ENCODE measurements at regions of chr5 and their contacts with region 1.

Region 1: DNA sequence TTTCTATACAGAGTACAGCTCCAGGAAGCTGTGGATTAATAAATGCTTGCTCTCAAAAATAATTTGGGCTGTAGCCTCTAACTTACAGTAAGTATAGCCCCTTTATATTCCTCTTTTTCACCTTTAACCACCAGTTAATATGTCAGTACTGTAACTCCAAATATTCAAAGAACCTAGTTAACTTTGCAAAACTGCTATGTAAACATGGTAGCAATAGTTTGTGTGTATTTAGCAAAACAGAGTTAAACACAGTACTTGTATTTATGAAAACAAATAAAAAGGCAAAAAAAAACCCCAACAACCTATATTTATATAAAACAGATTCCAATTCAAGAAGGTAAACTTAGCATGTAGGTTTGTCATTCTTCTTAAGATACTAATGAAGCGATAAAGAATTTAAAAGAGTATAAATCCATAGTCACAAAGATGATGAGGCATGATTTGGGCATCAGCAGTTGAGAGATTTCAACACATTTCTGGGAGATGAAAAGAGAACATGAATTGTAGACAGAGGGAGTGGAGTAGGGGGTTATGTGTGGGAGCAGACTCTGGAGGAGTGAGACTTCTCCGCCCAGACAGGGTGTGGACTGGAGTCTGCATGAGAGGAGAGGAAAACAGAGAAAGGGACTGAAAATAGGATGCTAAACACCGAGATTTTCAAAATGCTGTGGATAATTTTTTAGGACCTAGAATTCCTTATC is 47.0 kb upstream of the F2RL1 start:
- DNase-seq: no peak
- H3K4me3 ChIP-seq: no peak overlapping the region
- H3K27ac ChIP-seq: no peak overlapping the region
- H3K4me1 ChIP-seq: 0 out of 2 replicates have a peak, but pooled peaks cover 6% of the 10 kb centered on the region
- H3K27me3 ChIP-seq: no peaks in the 10 kb centered on the region
- CTCF ChIP-seq: no peak

Region 2: GRCh38 chr5:76337953-76338451 is 433.9 kb before region 1 on chr5:
- CTCF ChIA-PET with region 1: interaction called, 3 read pairs
- POLR2A ChIA-PET with region 1: no interaction called
- intact Hi-C with region 1: loop called (anchors 10 kb)
- DNase-seq: peak; percentile 72 to 76
- H3K4me3 ChIP-seq: no peak overlapping the region
- H3K27ac ChIP-seq: no peak overlapping the region
- H3K4me1 ChIP-seq: 0 out of 2 replicates have a peak, but pooled peaks cover 4% of the 10 kb centered on the region
- H3K27me3 ChIP-seq: no peaks in the 10 kb centered on the region
- CTCF ChIP-seq: peak; percentile 78

Region 3: GRCh38 chr5:76601470-76601869 is 170.4 kb before region 1 on chr5:
- CTCF ChIA-PET with region 1: interaction called, 19 read pairs
- POLR2A ChIA-PET with region 1: no interaction called
- intact Hi-C with region 1: loop called (anchors 1 kb)
- DNase-seq: peak in 1 of 2 experiments; percentile 23
- H3K4me3 ChIP-seq: no peak overlapping the region
- H3K27ac ChIP-seq: no peak overlapping the region
- H3K4me1 ChIP-seq: peaks cover 7% of the 10 kb centered on the region
- H3K27me3 ChIP-seq: no peaks in the 10 kb centered on the region
- CTCF ChIP-seq: peak; percentile 85

Region 4: GRCh38 chr5:76689321-76690036 is 82.4 kb before region 1 on chr5:
- CTCF ChIA-PET with region 1: no interaction called
- POLR2A ChIA-PET with region 1: no interaction called
- intact Hi-C with region 1: no loop called
- DNase-seq: peak in 1 of 2 experiments; percentile 89
- H3K4me3 ChIP-seq: no peak overlapping the region
- H3K27ac ChIP-seq: peak overlapping the region; percentile 25; the same call in 1 of the 2 replicates
- H3K4me1 ChIP-seq: peaks cover 33% of the 10 kb centered on the region
- H3K27me3 ChIP-seq: no peaks in the 10 kb centered on the region
- CTCF ChIP-seq: no peak

Region 5: GRCh38 chr5:76715736-76716455 is 56.0 kb before region 1 on chr5 and contains the start of gene F2R:
- CTCF ChIA-PET with region 1: no interaction called
- POLR2A ChIA-PET with region 1: no interaction called
- intact Hi-C with region 1: loop called (anchors 1 kb)
- DNase-seq: peak in 1 of 2 experiments; percentile 30
- H3K4me3 ChIP-seq: peak within 1 kb of the TSS; percentile 87
- H3K27ac ChIP-seq: no peak within 1 kb of the TSS
- H3K4me1 ChIP-seq: no peaks in the 10 kb centered on the region; the same call in 1 of the 2 replicates
- H3K27me3 ChIP-seq: no peaks in the 10 kb centered on the region
- CTCF ChIP-seq: peak; percentile 59; the same call in 1 of the 2 replicates
- total RNA-seq, gene F2R: 3.6 and 3.9 TPM in 2 replicates

Region 6: GRCh38 chr5:76782444-76782843 is 10.6 kb after region 1 on chr5:
- CTCF ChIA-PET with region 1: no interaction called
- POLR2A ChIA-PET with region 1: no interaction called
- intact Hi-C with region 1: no loop called
- DNase-seq: no peak
- H3K4me3 ChIP-seq: no peak overlapping the region
- H3K27ac ChIP-seq: no peak overlapping the region
- H3K4me1 ChIP-seq: peaks cover 22% of the 10 kb centered on the region
- H3K27me3 ChIP-seq: no peaks in the 10 kb centered on the region
- CTCF ChIP-seq: no peak

Region 7: DNA sequence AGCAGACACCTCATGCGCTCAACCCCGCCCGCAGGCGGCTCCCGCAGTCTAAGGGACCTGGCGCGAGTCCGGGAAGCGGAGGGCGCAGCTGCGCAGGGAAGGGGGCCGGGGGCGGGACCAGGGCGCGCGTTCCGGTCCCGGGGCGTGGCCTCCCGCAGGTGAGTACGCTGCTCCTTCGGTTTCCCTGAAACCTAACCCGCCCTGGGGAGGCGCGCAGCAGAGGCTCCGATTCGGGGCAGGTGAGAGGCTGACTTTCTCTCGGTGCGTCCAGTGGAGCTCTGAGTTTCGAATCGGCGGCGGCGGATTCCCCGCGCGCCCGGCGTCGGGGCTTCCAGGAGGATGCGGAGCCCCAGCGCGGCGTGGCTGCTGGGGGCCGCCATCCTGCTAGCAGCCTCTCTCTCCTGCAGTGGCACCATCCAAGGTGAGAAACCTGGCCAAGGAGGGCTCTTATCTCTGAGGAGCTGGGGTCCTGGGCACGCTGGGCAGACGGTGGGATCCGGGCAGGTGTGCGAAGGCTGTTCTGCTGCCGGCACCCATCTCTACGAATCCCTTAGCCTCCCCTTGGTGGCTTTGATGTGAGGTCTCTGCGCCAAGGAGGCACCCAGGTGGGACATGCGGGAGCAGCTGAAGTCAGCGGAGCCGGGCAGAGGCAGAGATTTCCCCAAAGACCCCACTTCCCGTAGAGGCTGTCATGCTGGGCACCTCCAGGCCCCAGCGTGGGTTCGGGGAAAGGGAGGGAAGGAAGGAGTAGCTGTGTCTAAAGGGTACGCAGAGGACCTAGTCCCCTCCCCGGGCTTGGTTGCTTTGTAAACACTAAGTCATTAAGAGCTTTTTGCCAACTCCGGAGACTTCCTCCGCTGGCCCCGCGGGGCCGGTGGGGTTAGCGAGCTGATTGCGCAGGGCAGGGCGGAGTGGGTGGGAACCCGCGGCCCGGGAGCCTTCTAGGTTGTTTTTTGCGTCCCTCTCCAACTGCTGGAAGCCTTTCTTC is 47.3 kb after region 1 on chr5 and contains the start of gene F2RL1:
- CTCF ChIA-PET with region 1: interaction called, 3 read pairs
- POLR2A ChIA-PET with region 1: interaction called, 19 read pairs
- intact Hi-C with region 1: loop called (anchors 5 kb)
- DNase-seq: peak; percentile 93 to 94
- H3K4me3 ChIP-seq: peak within 1 kb of the TSS; percentile 95
- H3K27ac ChIP-seq: peak within 1 kb of the TSS; percentile 91
- H3K4me1 ChIP-seq: peaks cover 73% of the 10 kb centered on the region
- H3K27me3 ChIP-seq: no peaks in the 10 kb centered on the region
- CTCF ChIP-seq: 0 out of 2 replicates have a peak, but pooled peaks have one; percentile 3
- total RNA-seq, gene F2RL1: 34.5 and 34.6 TPM in 2 replicates

Region 8: GRCh38 chr5:77015938-77016569 is 244.2 kb after region 1 on chr5:
- CTCF ChIA-PET with region 1: no interaction called
- POLR2A ChIA-PET with region 1: no interaction called
- intact Hi-C with region 1: loop called (anchors 2 kb)
- DNase-seq: peak in 1 of 2 experiments; percentile 35
- H3K4me3 ChIP-seq: no peak overlapping the region
- H3K27ac ChIP-seq: no peak overlapping the region
- H3K4me1 ChIP-seq: no peaks in the 10 kb centered on the region
- H3K27me3 ChIP-seq: no peaks in the 10 kb centered on the region
- CTCF ChIP-seq: peak; percentile 61